ENCODE measurements at regions of chr14 and their contacts with region 1.

Region 1: DNA sequence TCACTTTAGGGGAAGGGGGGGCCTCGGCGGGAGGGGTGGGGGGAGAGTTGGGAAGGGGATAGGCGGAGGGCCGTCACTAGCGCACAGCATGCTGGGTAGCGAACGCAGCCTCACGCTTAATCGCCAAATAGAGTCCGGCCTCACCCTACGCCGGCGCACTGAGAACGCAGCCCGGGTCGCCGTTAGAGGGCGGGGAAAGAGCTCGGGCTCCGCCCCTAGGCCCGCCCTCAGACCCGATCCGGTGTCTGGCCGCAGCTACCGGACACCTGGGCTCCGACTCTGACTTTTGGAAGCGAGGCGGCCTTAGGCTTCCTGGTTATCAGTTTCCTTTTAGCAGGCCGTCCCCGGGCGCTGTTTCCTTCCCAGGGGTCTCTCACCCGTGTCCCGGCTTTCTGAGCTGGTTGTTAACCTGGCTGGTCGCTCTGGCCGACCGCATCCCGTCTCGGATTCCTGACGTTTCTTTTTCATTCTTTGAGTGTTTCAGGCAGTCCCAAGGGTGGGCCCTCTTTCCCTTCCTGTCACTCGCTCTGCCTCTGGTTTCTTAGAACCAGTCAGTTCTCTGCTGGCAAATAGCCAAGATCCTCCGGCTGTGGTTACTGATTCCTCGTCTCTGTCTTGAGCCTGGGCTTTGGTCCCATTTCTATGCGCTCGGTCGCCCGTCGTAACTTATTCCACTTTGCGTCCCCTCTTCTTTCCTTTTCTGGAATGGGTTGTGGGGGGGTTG is 378 bp upstream of the STRN3 start:
- DNase-seq: peak; percentile 95
- ATAC-seq: peak; percentile 91
- H3K4me3 Mint-ChIP-seq: peak overlapping the region; percentile 83
- H3K27ac Mint-ChIP-seq: peak overlapping the region; percentile 90
- H3K4me1 Mint-ChIP-seq: peaks cover 55% of the 10 kb centered on the region
- H3K27me3 Mint-ChIP-seq: no peaks in the 10 kb centered on the region

Region 2: GRCh38 chr14:30558675-30559555 is 467.6 kb before region 1 on chr14 and contains the start of gene G2E3:
- CTCF ChIA-PET with region 1: no interaction called
- POLR2A ChIA-PET with region 1: no interaction called
- intact Hi-C with region 1: loop called in 1 of 2 experiments (anchors 1 kb)
- DNase-seq: peak; percentile 93
- ATAC-seq: peak; percentile 99
- H3K4me3 Mint-ChIP-seq: peak within 1 kb of the TSS; percentile 100
- H3K27ac Mint-ChIP-seq: peak within 1 kb of the TSS; percentile 100
- H3K4me1 Mint-ChIP-seq: peaks cover 33% of the 10 kb centered on the region
- H3K27me3 Mint-ChIP-seq: peaks cover 2% of the 10 kb centered on the region
- total RNA-seq, gene G2E3: 16.9 to 29.6 TPM

Region 3: DNA sequence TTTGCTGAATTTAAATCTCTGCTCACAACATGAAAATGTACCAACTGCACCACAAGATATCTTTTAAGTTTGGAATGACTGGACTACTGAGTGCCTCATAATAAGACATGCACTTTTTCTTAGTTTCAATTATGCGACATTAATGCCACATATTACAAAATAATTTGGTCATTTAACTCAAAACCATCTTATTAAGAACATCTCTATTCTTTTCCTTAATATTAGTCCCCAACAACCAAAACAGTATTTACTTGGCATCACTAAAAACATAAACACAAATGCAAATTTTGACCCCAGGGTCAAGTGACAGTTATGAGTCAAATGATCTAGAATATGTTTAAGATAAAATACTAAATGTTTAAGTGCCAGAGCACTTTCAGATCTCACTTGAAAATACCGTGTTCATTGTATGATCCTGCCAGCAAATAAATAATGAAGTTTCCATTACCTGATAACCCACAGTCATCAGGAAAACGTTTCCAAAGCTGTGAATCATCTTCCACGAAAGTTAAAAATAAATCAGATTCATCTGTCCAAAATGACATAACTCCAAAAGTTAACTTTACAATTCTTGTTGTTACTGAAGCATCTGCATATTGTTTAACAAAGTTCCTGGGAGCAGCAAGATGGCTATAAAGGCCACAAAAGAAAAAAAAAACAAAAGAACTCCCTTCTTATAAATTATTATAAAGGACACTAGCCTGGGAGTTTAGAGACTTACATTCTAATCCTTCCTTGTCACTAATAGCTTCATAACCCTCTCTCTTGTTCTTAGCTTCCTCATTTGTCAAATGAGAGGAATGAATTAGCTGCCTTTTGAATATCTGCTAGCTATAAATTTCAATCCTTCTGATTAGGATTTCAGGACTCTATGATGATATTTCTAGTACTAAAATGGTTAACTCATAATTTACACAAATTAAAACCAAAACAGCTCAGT is 31.6 kb before region 1 on chr14:
- CTCF ChIA-PET with region 1: no interaction called
- POLR2A ChIA-PET with region 1: no interaction called
- intact Hi-C with region 1: loop called (anchors 1 to 5 kb)
- DNase-seq: no peak
- ATAC-seq: peak; percentile 61
- H3K4me3 Mint-ChIP-seq: peak overlapping the region; percentile 38
- H3K27ac Mint-ChIP-seq: peak overlapping the region; percentile 85
- H3K4me1 Mint-ChIP-seq: peaks cover 43% of the 10 kb centered on the region
- H3K27me3 Mint-ChIP-seq: no peaks in the 10 kb centered on the region

Region 4: DNA sequence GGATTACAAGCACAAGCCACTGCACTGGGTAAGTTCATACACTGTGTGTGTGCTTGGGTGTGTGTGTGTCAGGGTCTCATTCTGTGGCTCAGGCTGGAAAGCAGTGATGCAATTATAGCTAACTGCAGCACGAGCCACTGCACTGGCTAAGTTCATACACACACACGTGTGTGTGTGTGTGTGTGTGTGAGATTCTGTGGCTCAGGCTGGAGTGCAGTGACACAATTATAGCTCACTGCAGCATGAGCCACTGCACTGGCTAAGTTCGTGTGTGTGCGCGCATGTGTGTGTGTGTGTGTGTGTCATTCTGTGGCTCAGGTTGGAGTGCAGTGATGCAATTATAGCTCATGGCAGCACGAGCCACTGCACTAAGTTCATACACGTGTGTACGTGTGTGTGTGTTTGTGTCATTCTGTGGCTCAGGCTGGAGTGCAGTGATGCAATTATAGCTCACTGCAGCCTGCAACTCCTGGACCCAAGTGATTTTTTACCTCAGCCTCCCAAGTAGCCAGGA is 95.6 kb after region 1 on chr14:
- CTCF ChIA-PET with region 1: no interaction called
- POLR2A ChIA-PET with region 1: no interaction called
- intact Hi-C with region 1: no loop called
- DNase-seq: peak; percentile 19
- ATAC-seq: no peak
- H3K4me3 Mint-ChIP-seq: no peak overlapping the region
- H3K27ac Mint-ChIP-seq: no peak overlapping the region
- H3K4me1 Mint-ChIP-seq: peaks cover 14% of the 10 kb centered on the region
- H3K27me3 Mint-ChIP-seq: no peaks in the 10 kb centered on the region